Gastrocnemius medialis (tissue), 4 donors: ENCODE measurements at regions of chr19 and their contacts with region 1.

Region 1: GRCh38 chr19:12722566-12723380 is 959 bp downstream of the TNPO2 start:
- DNase-seq: peak; percentile 98 to 99
- ATAC-seq: peak; percentile 96
- H3K4me3 ChIP-seq: peak overlapping the region; percentile 72 to 83 (median 76)
- H3K27ac ChIP-seq: peak overlapping the region; percentile 87 to 99 (median 94)
- H3K4me1 ChIP-seq: peaks cover 26 to 29% of the 10 kb centered on the region in 2 donors
- H3K27me3 ChIP-seq: no peaks in the 10 kb centered on the region
- CTCF ChIP-seq: peak in 1 of 5 experiments; percentile 42
- POLR2A ChIP-seq: peak; percentile 30 to 35

Region 2: GRCh38 chr19:12681074-12681951 is 41.5 kb before region 1 on chr19 and contains the start of gene DHPS:
- in situ Hi-C with region 1: no loop called
- intact Hi-C with region 1: loop called (anchors 5 kb)
- DNase-seq: peak; percentile 94
- ATAC-seq: peak; percentile 95 to 97
- H3K4me3 ChIP-seq: peak within 1 kb of the TSS; percentile 88 to 99 (median 99)
- H3K27ac ChIP-seq: peak within 1 kb of the TSS; percentile 94 to 99 (median 96)
- H3K4me1 ChIP-seq: peaks cover 4 to 16% of the 10 kb centered on the region in 2 donors
- H3K27me3 ChIP-seq: no peaks in the 10 kb centered on the region
- CTCF ChIP-seq: peak in 2 of 5 experiments; percentile 26 to 41
- POLR2A ChIP-seq: peak; percentile 45 to 70
- total RNA-seq, gene DHPS: 115 to 184 (median 127) TPM

Region 3: GRCh38 chr19:12789904-12790619 is 67.3 kb after region 1 on chr19:
- in situ Hi-C with region 1: no loop called
- intact Hi-C with region 1: loop called (anchors 5 kb)
- DNase-seq: peak; percentile 89 to 90
- ATAC-seq: peak; percentile 32 to 34
- H3K4me3 ChIP-seq: peak overlapping the region; percentile 91 to 98 (median 94)
- H3K27ac ChIP-seq: peak overlapping the region; percentile 99 to 100 (median 100)
- H3K4me1 ChIP-seq: peaks cover 45 to 46% of the 10 kb centered on the region in 2 donors
- H3K27me3 ChIP-seq: no peaks in the 10 kb centered on the region
- CTCF ChIP-seq: no peak
- POLR2A ChIP-seq: peak; percentile 88 to 93